ENCODE measurements at regions of chr2 and their contacts with region 1.

Region 1: DNA sequence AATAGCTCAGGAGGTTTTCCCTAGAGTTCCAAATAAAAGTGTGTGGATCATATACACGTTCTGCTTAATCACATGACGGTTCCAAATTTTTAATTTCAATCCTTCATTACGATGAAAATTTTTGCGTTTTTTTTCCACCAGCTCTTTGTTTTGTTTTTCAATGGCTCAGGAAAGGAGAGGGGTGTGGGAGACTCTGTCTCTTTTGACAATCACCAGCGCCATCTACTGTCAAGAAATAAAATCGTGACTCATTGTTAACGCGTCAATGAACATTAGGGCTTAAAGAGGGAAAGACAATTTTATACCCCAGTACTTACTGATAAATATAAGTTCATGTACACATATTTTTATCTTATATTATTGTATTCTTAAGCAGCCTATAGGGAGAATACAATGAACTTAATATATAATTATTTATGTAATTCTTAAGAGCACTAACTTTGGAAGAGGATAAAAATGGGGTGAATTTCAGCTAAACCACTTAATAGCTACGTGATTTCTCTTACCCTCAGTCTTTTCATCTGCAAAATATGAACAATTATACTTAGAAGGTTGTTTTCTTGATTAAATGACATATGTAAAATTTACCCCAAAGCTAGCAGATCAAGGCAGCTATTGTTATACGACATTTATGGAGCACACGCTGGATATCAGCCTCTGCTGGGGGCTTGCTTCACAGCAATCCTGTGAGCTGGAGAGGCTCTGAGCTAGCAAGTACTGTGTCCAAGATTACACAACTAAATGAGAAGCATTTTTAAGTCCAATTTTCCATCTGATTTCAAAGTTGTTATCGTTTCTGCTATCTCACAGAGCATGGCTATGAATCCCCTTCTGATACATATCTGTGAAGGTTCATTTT is 47.4 kb upstream of the RMDN2 start:
- DNase-seq: peak; percentile 59
- ATAC-seq: peak; percentile 69 to 90
- H3K4me3 ChIP-seq: no peak overlapping the region
- H3K27ac ChIP-seq: no peak overlapping the region; a peak in 1 of 6 replicates
- H3K4me1 ChIP-seq: no peaks in the 10 kb centered on the region
- CTCF ChIP-seq: peak; percentile 98
- EP300 ChIP-seq: no peak
- POLR2A ChIP-seq: no peak
- RAD21 ChIP-seq: peak; percentile 93 to 95

Region 2: DNA sequence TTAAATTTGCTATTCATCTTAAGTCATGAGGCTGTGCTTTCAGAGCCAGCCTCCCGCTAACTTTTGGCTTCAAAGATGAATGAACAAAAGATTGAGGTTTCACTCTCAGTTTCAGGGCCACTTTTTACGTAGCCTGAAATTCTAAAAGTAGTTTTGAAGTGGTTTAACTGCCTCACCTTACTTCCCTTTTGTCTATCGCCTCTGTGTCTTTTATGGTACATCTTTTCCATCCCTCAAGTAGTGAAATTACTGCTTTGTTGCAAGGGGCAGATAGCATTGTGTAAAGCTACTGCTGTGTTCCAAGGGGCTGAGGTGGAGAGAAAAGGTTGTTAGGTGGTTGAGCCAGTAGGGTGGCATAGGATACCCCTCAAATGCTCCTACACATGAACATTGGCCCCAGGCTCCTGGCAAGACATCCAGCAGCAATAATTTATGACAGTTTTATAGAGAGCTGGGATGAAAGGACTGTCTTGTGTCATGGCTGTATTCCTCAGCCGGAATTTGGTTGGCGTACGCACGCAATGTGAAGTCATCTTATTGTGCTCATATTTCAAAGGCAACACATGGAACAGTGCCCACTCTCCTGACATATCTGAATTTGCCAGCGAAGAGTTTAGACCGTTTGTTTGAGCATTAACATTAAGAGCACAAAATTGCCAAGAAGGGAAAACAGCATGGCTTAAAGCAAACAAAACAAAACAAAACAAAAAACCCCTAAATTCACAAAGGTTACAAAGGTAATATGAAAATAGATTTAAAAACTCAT is 501.1 kb before region 1 on chr2:
- CTCF ChIA-PET with region 1: interaction called, 18 read pairs
- POLR2A ChIA-PET with region 1: no interaction called
- DNase-seq: no peak
- ATAC-seq: no peak; a peak in 1 of 6 replicates
- H3K4me3 ChIP-seq: no peak overlapping the region
- H3K27ac ChIP-seq: no peak overlapping the region
- H3K4me1 ChIP-seq: 0 out of 3 replicates have a peak, but pooled peaks cover 3% of the 10 kb centered on the region
- CTCF ChIP-seq: no peak
- EP300 ChIP-seq: no peak
- POLR2A ChIP-seq: no peak
- RAD21 ChIP-seq: no peak

Region 3: DNA sequence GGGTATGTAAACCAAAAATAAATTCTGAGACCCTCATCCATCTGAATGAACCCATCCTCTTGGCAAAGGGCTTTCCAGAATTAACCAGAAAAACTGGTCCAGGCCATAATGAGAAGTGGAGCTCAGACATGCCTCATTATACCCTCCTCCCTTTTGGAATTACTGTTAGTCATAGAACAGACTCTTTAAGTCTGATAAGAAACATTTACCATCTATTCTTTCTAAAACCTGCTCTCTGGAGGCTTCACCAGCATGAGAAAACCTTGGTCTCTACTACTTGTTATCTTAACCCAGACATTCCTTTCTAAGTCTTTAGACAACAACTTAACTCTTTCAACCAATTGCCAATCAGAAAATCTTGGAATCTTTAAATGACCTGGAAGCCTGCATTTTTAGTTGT is 450.4 kb before region 1 on chr2:
- CTCF ChIA-PET with region 1: interaction called, 10 read pairs
- POLR2A ChIA-PET with region 1: no interaction called
- DNase-seq: no peak
- ATAC-seq: no peak
- H3K4me3 ChIP-seq: no peak overlapping the region
- H3K27ac ChIP-seq: no peak overlapping the region
- H3K4me1 ChIP-seq: no peaks in the 10 kb centered on the region
- CTCF ChIP-seq: no peak
- EP300 ChIP-seq: no peak
- POLR2A ChIP-seq: no peak
- RAD21 ChIP-seq: no peak

Region 4: DNA sequence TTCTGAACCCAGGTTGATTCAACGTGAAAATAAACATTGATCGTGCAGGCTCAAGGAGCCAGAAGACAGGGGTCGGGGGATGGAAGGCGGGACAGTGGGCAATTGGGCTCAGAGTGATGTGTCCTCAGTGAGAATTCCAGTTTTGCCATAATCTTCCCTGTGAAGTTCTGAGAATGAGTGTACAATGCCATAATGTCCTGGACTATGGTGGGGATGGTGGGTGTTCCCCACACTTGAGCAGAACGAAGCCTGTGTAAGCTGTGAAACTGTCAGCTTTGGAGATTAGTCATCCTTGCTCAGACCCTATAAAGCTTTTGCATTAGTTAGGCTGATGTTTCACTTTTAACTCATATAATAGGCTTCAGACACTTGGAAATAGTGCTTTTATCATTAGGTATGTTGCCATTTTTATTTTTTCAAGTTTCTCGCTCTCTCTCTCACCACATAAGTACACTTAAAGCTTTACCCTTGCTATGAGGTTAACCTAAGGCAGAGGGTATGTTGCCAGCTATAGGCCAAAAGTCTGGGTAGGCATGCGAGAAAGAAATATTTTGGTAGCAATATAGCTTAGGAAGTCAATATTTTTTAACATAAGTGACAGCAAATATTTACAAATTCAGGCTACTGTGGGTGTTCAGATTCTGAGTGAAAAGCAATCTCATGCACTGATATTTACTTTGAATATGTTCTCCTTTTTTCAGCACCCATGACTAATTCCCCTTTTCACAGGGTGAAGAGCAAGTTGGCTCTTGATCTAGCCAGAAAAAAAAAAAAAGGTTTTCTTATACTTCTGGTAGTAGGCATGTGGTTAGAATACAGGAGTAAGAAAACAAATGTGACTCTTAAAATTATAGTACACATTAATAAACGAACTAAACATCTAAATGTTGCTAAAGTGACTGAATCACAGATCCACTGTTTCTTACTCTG is 253.4 kb before region 1 on chr2:
- CTCF ChIA-PET with region 1: interaction called, 19 read pairs
- POLR2A ChIA-PET with region 1: no interaction called
- DNase-seq: no peak
- ATAC-seq: no peak
- H3K4me3 ChIP-seq: no peak overlapping the region
- H3K27ac ChIP-seq: no peak overlapping the region
- H3K4me1 ChIP-seq: peaks cover 7% of the 10 kb centered on the region; the same call in 1 of the 3 replicates
- CTCF ChIP-seq: no peak
- EP300 ChIP-seq: no peak
- POLR2A ChIP-seq: no peak
- RAD21 ChIP-seq: no peak

Region 5: DNA sequence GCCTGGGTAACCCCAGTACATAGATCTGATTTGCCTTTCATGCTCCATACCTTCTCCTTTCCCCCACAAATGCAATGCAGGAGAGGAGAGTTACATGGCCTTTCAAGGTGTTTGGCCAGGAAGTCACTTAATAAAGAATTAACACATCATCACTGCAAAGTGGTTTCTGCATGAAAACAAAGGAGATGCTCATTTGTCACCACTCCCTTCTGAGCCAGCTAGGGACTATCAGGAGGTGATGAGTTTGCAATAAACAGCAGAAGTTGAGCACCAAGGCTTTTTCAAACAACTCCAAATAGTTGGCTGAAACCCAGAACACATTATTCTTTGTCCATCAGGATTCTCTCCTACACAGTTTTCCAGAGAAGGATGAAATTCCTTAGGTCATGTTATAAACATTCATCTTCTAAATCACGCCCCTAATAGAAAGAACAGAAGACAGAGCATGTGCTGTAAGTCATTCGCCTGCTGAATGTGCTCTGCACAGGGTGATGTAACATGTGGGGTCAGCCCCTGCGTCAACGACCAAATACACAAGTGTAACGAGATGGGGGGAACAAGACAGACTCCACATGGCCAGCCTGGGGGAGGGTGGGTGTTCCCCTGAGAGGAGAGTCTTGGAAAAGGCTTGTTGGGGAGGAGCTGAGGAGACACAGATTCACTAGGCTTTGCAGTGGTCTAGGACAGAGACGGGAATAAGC is 39.9 kb before region 1 on chr2:
- CTCF ChIA-PET with region 1: interaction called, 53 read pairs
- POLR2A ChIA-PET with region 1: interaction called, 3 read pairs
- DNase-seq: no peak
- ATAC-seq: no peak
- H3K4me3 ChIP-seq: no peak overlapping the region
- H3K27ac ChIP-seq: no peak overlapping the region
- H3K4me1 ChIP-seq: peaks cover 3% of the 10 kb centered on the region; the same call in 1 of the 3 replicates
- CTCF ChIP-seq: no peak
- EP300 ChIP-seq: no peak
- POLR2A ChIP-seq: no peak
- RAD21 ChIP-seq: no peak

Region 6: GRCh38 chr2:37890893-37891495 is 13.3 kb after region 1 on chr2:
- CTCF ChIA-PET with region 1: interaction called, 108 read pairs
- POLR2A ChIA-PET with region 1: no interaction called
- DNase-seq: peak; percentile 79 to 90
- ATAC-seq: peak; percentile 98 to 100
- H3K4me3 ChIP-seq: no peak overlapping the region
- H3K27ac ChIP-seq: no peak overlapping the region
- H3K4me1 ChIP-seq: no peaks in the 10 kb centered on the region
- CTCF ChIP-seq: peak; percentile 91
- EP300 ChIP-seq: no peak
- POLR2A ChIP-seq: no peak
- RAD21 ChIP-seq: peak; percentile 86 to 94

Measured in A549 (cell line).